ENCODE measurements at regions of chr12 and their contacts with region 1.

Region 1: GRCh38 chr12:115828186-115828585 is 449.3 kb downstream of the MED13L start:
- DNase-seq: no peak
- H3K4me3 ChIP-seq: no peak overlapping the region
- H3K27ac ChIP-seq: no peak overlapping the region
- H3K4me1 ChIP-seq: no peaks in the 10 kb centered on the region
- H3K27me3 ChIP-seq: no peaks in the 10 kb centered on the region
- CTCF ChIP-seq: no peak

Region 2: DNA sequence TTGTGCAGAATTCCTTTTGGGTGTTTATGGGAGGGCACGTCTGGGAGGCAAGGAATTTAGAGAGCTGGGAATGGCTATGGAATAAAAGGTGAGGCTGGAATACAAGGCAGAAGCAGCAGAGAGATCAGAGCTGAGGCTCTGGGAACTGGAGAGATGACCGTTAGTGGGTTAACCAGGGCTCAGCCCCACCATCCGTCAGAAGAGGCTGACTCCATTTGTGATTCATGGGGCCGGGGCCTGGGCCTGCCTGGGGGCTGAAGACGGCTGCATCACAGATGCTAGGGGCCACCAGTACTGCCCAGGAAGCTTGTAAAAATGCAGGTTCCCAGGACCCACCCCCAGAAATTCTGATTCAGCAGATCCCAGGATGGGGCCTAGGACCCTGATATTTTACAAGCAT is 51.2 kb after region 1 on chr12:
- CTCF ChIA-PET with region 1: no interaction called
- dilution Hi-C with region 1: loop called (anchors 5 kb)
- in situ Hi-C with region 1: no loop called
- intact Hi-C with region 1: no loop called
- DNase-seq: no peak
- H3K4me3 ChIP-seq: no peak overlapping the region
- H3K27ac ChIP-seq: no peak overlapping the region
- H3K4me1 ChIP-seq: no peaks in the 10 kb centered on the region
- H3K27me3 ChIP-seq: peaks cover 5% of the 10 kb centered on the region
- CTCF ChIP-seq: no peak

Measured in mammary epithelial cell (primary cell).